ENCODE measurements at regions of chr19 and their contacts with region 1.

Region 1: GRCh38 chr19:36837906-36838783 is at the start of gene ZNF790:
- DNase-seq: peak; percentile 91 to 92 (median 91)
- ATAC-seq: peak; percentile 98 to 99 (median 99)
- H3K4me3 ChIP-seq: peak within 1 kb of the TSS; percentile 27 to 92 (median 73)
- H3K27ac ChIP-seq: peak within 1 kb of the TSS; percentile 69 to 98 (median 92)
- H3K4me1 ChIP-seq: peaks cover 0 to 32% (median 15%) of the 10 kb centered on the region in 12 donors
- H3K27me3 ChIP-seq: no peaks in the 10 kb centered on the region
- CTCF ChIP-seq: no peak
- POLR2A ChIP-seq: peak in 1 of 2 donors; percentile 21
- total RNA-seq, gene ZNF790: 3.4 to 13.0 (median 8.5) TPM

Region 2: DNA sequence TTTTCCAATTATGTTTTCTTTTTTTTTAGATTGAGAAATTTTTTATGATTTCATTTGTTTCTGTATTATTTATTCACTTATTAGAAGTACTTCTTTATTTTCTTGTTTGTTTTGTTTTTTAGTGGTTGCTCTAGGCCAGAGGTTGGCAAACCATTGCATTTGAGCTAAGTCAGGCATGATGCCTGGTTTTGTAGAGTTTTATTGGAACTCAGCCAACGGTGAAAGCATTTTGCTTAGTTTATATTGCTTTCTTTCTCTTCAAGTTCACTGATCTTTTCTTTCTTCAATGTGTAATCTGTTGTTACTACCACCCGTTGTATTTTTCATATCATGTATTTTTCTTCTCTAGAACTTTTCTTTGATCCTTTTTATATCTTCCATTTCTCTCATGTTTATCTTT is 131.0 kb before region 1 on chr19:
- intact Hi-C with region 1: no loop called
- DNase-seq: no peak
- ATAC-seq: no peak
- H3K4me3 ChIP-seq: no peak overlapping the region
- H3K27ac ChIP-seq: no peak overlapping the region
- H3K4me1 ChIP-seq: no peaks in the 10 kb centered on the region
- H3K27me3 ChIP-seq: no peaks in the 10 kb centered on the region
- CTCF ChIP-seq: no peak
- POLR2A ChIP-seq: no peak

Region 3: GRCh38 chr19:36753305-36753704 is 84.8 kb before region 1 on chr19:
- intact Hi-C with region 1: no loop called
- DNase-seq: no peak
- ATAC-seq: no peak
- H3K4me3 ChIP-seq: no peak overlapping the region
- H3K27ac ChIP-seq: no peak overlapping the region
- H3K4me1 ChIP-seq: no peaks in the 10 kb centered on the region
- H3K27me3 ChIP-seq: no peaks in the 10 kb centered on the region
- CTCF ChIP-seq: no peak
- POLR2A ChIP-seq: no peak

Region 4: GRCh38 chr19:36796076-36796992 is 41.8 kb before region 1 on chr19:
- intact Hi-C with region 1: loop called in 2 of 10 experiments (anchors 5 kb)
- DNase-seq: no peak
- ATAC-seq: no peak
- H3K4me3 ChIP-seq: peak overlapping the region; percentile 48 to 96 (median 77)
- H3K27ac ChIP-seq: peak overlapping the region; percentile 20 to 87 (median 77)
- H3K4me1 ChIP-seq: peaks cover 0 to 16% (median 8%) of the 10 kb centered on the region in 12 donors
- H3K27me3 ChIP-seq: no peaks in the 10 kb centered on the region
- CTCF ChIP-seq: no peak
- POLR2A ChIP-seq: no peak

Region 5: DNA sequence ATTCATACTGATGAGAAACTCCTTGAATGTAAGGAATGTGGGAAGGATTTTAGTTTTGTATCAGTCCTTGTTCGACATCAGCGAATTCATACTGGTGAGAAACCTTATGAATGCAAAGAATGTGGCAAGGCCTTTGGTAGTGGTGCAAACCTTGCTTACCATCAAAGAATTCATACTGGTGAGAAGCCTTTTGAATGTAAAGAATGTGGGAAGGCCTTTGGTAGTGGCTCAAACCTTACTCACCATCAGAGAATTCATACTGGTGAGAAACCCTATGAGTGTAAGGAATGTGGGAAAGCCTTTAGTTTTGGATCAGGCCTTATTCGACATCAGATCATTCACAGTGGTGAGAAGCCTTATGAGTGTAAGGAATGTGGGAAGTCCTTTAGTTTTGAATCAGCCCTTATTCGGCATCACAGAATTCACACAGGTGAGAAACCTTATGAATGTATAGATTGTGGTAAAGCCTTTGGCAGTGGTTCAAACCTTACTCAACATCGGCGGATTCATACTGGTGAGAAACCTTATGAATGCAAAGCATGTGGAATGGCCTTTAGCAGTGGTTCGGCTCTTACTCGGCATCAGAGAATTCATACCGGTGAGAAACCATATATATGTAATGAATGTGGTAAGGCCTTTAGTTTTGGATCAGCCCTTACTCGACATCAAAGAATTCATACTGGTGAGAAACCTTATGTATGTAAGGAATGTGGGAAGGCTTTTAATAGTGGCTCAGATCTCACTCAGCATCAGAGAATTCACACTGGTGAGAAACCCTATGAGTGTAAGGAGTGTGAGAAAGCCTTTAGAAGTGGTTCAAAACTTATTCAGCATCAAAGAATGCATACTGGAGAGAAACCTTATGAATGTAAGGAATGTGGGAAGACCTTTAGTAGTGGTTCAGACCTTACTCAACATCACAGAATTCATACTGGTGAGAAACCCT is 39.1 kb after region 1 on chr19:
- intact Hi-C with region 1: no loop called
- DNase-seq: no peak
- ATAC-seq: no peak
- H3K4me3 ChIP-seq: no peak overlapping the region
- H3K27ac ChIP-seq: no peak overlapping the region
- H3K4me1 ChIP-seq: no peaks in the 10 kb centered on the region
- H3K27me3 ChIP-seq: no peaks in the 10 kb centered on the region
- CTCF ChIP-seq: no peak
- POLR2A ChIP-seq: no peak